Psoas muscle (tissue), 8 donors: ENCODE measurements at regions of chr5 and their contacts with region 1.

Region 1: DNA sequence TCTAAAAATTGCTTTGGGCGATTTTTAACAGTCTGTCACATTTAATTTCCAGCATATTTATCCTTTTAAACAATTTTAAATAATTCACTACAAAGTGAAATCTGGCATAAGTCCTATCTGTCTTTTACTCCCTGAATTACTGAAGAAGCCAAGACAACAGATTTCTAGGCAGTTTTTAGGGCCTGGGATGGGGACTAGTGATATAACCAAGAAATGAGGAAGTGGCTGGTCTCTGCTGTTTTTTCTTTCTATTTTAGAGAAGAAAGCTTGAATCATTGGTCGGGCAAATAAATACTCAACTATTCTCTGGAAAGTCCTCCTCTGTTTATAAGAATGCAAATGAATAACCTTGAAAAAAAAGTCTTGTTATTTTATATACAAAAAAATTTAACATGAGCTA is 79.7 kb upstream of the SSBP2 start:
- DNase-seq: no peak
- ATAC-seq: no peak
- H3K4me3 ChIP-seq: no peak overlapping the region
- H3K27ac ChIP-seq: no peak overlapping the region
- H3K4me1 ChIP-seq: no peaks in the 10 kb centered on the region
- H3K27me3 ChIP-seq: no peaks in the 10 kb centered on the region
- CTCF ChIP-seq: no peak

Region 2: DNA sequence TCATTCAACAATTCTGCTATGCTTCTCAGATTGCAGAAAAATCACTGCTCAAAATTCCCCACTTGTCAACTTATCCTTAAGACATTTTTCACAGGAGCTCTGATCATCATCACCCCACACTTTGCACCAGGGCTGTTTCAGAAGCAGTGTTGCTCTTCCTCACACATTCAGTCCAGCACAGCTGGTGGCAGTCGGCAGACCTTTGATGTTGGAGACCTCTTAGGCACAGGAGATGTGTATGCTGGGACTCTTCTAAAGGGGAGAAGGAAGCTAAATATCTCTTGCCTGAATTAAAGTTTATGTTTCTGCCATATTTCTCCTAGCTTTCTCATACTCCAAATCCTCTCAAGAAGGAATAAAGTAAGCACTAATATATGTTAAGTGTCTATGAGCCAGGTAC is 34.9 kb before region 1 on chr5:
- intact Hi-C with region 1: loop called in 1 of 2 experiments (anchors 5 kb)
- DNase-seq: no peak
- ATAC-seq: no peak
- H3K4me3 ChIP-seq: no peak overlapping the region
- H3K27ac ChIP-seq: no peak overlapping the region
- H3K4me1 ChIP-seq: no peaks in the 10 kb centered on the region
- H3K27me3 ChIP-seq: no peaks in the 10 kb centered on the region
- CTCF ChIP-seq: no peak